Activated CD4-positive, alpha-beta T cell treated with anti-CD3 and anti-CD28 coated beads for 36 hours (primary cell): ENCODE measurements at regions of chr17 and their contacts with region 1.

Region 1: GRCh38 chr17:45584092-45585036 is 93.8 kb upstream of the PLEKHM1 start:
- DNase-seq: peak; percentile 78
- ATAC-seq: peak; percentile 48
- H3K4me3 Mint-ChIP-seq: peak overlapping the region; percentile 90
- H3K27ac Mint-ChIP-seq: peak overlapping the region; percentile 94
- H3K4me1 Mint-ChIP-seq: peaks cover 24% of the 10 kb centered on the region
- H3K27me3 Mint-ChIP-seq: no peaks in the 10 kb centered on the region

Region 2: GRCh38 chr17:45428050-45428617 is 156.2 kb before region 1 on chr17:
- CTCF ChIA-PET with region 1: no interaction called
- POLR2A ChIA-PET with region 1: no interaction called
- intact Hi-C with region 1: loop called in 1 of 2 experiments (anchors 2 kb)
- DNase-seq: peak; percentile 88
- ATAC-seq: peak; percentile 79
- H3K4me3 Mint-ChIP-seq: peak overlapping the region; percentile 9
- H3K27ac Mint-ChIP-seq: no peak overlapping the region
- H3K4me1 Mint-ChIP-seq: peaks cover 21% of the 10 kb centered on the region
- H3K27me3 Mint-ChIP-seq: peaks cover 6% of the 10 kb centered on the region

Region 3: GRCh38 chr17:45640141-45640850 is 55.9 kb after region 1 on chr17:
- CTCF ChIA-PET with region 1: no interaction called
- POLR2A ChIA-PET with region 1: no interaction called
- intact Hi-C with region 1: no loop called
- DNase-seq: peak; percentile 84
- ATAC-seq: peak; percentile 80
- H3K4me3 Mint-ChIP-seq: no peak overlapping the region
- H3K27ac Mint-ChIP-seq: peak overlapping the region; percentile 40
- H3K4me1 Mint-ChIP-seq: peaks cover 4% of the 10 kb centered on the region
- H3K27me3 Mint-ChIP-seq: no peaks in the 10 kb centered on the region

Region 4: DNA sequence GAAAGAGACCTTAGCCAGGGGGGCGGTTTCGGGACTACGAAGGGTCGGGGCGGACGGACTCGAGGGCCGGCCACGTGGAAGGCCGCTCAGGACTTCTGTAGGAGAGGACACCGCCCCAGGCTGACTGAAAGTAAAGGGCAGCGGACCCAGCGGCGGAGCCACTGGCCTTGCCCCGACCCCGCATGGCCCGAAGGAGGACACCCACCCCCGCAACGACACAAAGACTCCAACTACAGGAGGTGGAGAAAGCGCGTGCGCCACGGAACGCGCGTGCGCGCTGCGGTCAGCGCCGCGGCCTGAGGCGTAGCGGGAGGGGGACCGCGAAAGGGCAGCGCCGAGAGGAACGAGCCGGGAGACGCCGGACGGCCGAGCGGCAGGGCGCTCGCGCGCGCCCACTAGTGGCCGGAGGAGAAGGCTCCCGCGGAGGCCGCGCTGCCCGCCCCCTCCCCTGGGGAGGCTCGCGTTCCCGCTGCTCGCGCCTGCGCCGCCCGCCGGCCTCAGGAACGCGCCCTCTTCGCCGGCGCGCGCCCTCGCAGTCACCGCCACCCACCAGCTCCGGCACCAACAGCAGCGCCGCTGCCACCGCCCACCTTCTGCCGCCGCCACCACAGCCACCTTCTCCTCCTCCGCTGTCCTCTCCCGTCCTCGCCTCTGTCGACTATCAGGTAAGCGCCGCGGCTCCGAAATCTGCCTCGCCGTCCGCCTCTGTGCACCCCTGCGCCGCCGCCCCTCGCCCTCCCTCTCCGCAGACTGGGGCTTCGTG is 309.8 kb after region 1 on chr17 and contains the start of gene MAPT:
- CTCF ChIA-PET with region 1: no interaction called
- POLR2A ChIA-PET with region 1: no interaction called
- intact Hi-C with region 1: loop called in 1 of 2 experiments (anchors 1 kb)
- DNase-seq: peak; percentile 90
- ATAC-seq: peak; percentile 91
- H3K4me3 Mint-ChIP-seq: peak within 1 kb of the TSS; percentile 75
- H3K27ac Mint-ChIP-seq: no peak within 1 kb of the TSS
- H3K4me1 Mint-ChIP-seq: peaks cover 19% of the 10 kb centered on the region
- H3K27me3 Mint-ChIP-seq: peaks cover 36% of the 10 kb centered on the region
- total RNA-seq, gene MAPT: 0.75 to 1.7 TPM